ENCODE measurements at regions of chr4 and their contacts with region 1.

Region 1: DNA sequence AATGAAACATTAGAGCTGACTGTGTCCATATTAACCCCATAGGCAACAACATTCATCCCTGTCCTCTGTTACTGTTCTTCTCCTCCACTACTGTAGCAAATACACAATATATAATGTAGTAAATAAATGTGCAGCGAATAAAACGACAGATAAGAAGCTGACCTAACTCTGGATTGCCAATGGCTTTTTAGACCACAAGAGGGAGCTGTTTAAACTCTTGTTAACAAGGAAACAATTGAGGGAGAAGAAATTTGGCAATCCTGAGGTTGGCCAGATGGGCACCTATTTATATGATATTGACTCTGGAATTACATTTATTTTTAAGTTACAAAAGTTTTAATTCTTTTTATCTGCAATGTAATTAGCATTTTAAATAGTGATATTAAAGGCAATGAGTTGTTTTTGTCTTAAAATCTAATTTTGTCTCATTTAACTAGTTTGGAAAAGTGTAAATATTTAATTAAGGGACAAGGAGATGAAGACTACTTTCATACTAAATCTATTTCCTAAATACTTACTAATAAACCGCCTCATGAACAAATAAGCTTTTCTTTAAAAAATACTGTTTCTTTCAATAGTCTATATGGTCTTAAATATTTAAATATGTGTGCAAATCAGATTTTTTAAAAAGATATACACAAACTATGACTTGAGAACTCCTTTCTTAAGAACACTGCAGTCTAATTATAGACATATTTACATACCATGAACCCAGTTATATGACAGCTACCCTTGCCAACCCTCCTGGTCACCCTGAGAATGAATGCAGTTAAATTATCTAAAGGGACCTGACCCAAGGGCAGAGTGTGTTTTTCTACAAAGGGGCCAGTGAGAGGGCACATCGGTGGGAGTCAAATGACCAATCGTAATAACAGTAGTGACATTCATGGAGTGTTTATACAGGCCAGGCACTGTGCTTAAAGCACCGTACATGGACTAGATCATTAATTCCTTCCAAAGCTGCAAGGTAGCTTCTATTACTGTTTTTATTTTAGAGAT is 52.9 kb upstream of the HPF1 start:
- DNase-seq: no peak
- ATAC-seq: peak in 1 of 2 donors; percentile 44

Region 2: DNA sequence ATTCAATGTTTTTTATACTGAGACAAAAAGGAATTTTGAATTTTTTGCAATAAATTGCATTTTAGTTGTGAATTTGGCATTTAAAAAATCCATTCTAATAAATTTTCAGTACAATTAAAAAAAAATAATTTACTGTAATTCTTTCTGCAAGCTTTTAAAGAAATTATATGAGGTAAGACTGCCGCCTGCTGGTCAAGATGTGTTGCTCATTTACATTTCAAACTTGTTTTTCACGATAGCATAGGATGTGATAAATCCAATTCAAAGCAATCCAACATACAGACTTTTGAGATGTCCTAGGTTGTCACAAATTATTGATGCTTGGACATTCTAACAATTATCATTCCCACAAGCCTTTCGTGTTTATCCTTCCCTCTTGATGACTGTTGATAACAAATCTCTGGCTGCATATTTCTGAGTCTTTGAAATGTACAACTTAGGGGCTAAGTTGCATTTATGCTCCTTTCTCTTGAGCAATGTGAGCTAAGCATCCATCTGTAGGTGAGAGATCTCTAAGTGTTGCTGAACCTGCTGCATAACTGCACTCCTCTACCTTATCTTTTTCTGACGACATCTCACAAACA is 237.2 kb after region 1 on chr4:
- intact Hi-C with region 1: loop called (anchors 2 to 5 kb)
- DNase-seq: peak; percentile 57
- ATAC-seq: no peak

Measured in left cardiac atrium (tissue), 4 donors.